ENCODE measurements at regions of chr1 and their contacts with region 1.

Region 1: DNA sequence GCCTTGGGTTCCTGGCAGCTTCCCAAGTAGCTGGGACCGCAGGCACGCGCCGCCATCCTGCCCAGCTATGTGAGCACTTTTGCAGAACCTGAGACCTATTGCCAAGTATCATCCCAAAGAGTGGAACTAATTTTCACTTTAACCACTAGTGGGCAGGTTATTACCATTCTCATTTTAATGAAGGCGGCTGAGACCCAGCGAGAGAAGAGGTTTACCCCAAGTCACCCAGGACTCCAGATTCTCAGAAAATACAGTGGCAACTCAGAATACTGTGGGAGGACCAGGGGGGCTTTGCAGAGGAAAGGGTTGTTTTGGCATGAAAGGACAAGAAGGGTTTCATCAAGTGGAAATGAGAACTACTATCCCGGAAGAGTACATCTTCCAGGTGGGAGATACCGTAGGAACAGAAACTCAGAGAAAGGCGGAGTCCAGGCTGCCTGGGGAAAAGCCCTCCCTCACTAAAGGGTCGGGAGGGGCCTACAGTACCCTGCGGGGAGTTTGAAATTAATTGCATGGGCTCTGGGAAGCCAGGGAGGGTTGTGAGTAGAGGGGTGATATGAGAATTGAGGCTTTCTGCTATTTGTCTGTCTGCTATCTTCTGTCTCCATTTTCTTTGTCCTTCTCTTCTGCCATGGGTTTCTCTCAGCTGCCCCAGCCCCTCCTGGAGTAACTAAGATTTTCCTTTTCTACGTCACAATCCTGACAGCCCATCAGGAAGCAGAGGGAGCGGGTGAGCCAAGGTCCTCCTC is 7.2 kb upstream of the SEMA4A start:
- DNase-seq: peak; percentile 86
- ATAC-seq: peak; percentile 68
- H3K4me3 ChIP-seq: peak overlapping the region; percentile 44 to 63 (median 60)
- H3K27ac ChIP-seq: peak overlapping the region; percentile 31
- H3K4me1 ChIP-seq: peaks cover 59% of the 10 kb centered on the region
- H3K27me3 ChIP-seq: no peaks in the 10 kb centered on the region
- CTCF ChIP-seq: peak; percentile 92
- EP300 ChIP-seq: no peak
- POLR2A ChIP-seq: no peak
- RAD21 ChIP-seq: peak; percentile 92

Region 2: DNA sequence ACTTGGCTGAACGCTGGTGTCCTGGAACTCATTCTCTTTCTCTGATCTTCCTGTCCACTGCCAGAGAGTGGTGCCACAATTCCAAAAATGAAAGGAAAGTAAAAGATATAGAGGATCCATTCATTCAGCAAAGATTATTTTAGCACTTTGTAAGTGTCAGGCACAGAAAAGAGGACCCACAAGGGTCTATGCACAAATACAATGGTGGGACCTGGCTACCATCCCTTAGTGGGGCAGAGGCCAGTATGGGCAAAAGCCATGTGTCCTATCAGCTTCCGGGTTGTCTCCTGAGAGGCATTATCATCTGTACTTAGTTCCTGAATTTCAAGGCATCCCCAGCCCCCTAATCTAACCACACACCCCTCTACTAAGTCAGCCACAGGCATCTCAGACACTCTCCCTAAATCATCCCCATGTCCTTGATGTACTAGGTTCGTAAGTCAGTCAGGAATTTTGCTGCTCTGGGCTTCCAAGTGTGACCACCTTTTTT is 144.5 kb before region 1 on chr1:
- CTCF ChIA-PET with region 1: no interaction called
- POLR2A ChIA-PET with region 1: no interaction called
- in situ Hi-C with region 1: no loop called
- intact Hi-C with region 1: no loop called
- DNase-seq: no peak
- ATAC-seq: peak; percentile 46
- H3K4me3 ChIP-seq: peak overlapping the region; percentile 40 to 55 (median 45)
- H3K27ac ChIP-seq: peak overlapping the region; percentile 48
- H3K4me1 ChIP-seq: peaks cover 55% of the 10 kb centered on the region
- H3K27me3 ChIP-seq: no peaks in the 10 kb centered on the region
- CTCF ChIP-seq: peak; percentile 45
- EP300 ChIP-seq: no peak
- POLR2A ChIP-seq: no peak
- RAD21 ChIP-seq: no peak

Region 3: GRCh38 chr1:156177919-156178654 is 31.9 kb after region 1 on chr1:
- CTCF ChIA-PET with region 1: no interaction called
- POLR2A ChIA-PET with region 1: interaction called, 4 read pairs
- in situ Hi-C with region 1: no loop called
- intact Hi-C with region 1: loop called (anchors 5 kb)
- DNase-seq: no peak
- ATAC-seq: no peak
- H3K4me3 ChIP-seq: no peak overlapping the region
- H3K27ac ChIP-seq: no peak overlapping the region
- H3K4me1 ChIP-seq: peaks cover 93% of the 10 kb centered on the region
- H3K27me3 ChIP-seq: no peaks in the 10 kb centered on the region
- CTCF ChIP-seq: no peak
- EP300 ChIP-seq: no peak
- POLR2A ChIP-seq: no peak
- RAD21 ChIP-seq: no peak